ENCODE measurements at regions of chr9 and their contacts with region 1.

Region 1: GRCh38 chr9:129028192-129028957 is at the start of gene SH3GLB2:
- DNase-seq: peak; percentile 96
- H3K4me3 ChIP-seq: peak within 1 kb of the TSS; percentile 54 to 71
- H3K27ac ChIP-seq: peak within 1 kb of the TSS; percentile 51 to 81
- H3K4me1 ChIP-seq: peaks cover 9% of the 10 kb centered on the region
- H3K27me3 ChIP-seq: no peaks in the 10 kb centered on the region
- CTCF ChIP-seq: peak; percentile 78 to 88 (median 80)
- POLR2A ChIP-seq: no peak
- total RNA-seq, gene SH3GLB2: 113 to 178 TPM

Region 2: DNA sequence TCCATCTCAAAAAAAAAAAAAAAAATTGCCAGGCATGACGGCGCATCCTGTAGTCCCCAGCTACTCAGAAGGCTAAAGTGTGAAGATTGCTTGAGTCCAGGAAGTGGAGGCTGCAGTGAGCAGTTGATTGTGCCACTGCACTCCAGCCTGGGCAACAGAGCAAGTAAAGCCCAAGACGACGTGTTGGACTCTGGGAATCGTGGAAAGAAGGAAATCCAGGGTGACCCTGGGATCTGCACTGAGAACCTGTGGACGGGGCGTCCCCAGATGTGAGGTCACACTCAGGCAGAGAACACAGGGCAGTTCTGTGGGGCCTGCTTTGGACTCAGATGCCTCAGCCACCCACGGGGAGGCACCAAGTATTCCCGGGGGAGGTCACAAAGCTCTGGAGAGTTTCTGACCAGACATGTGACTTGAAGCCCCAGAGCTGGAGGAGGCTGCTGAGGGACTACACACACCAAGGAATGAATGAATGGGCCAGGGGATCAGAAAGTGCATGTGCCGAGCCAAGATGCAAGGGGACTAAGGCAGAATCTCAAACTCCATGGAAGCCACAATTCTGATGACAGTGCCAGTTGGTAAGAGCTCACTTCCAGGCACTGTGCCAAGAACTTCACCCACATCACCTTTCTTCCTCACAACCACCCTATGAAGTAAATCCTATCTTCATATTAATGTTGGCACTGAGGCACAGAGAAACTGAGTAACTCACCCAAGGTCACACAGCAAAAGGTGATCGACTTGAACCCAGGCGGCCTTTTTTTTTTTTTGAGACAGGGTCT is 384.7 kb before region 1 on chr9:
- intact Hi-C with region 1: no loop called
- DNase-seq: no peak
- H3K4me3 ChIP-seq: no peak overlapping the region
- H3K27ac ChIP-seq: no peak overlapping the region
- H3K4me1 ChIP-seq: no peaks in the 10 kb centered on the region
- H3K27me3 ChIP-seq: no peaks in the 10 kb centered on the region
- CTCF ChIP-seq: no peak
- POLR2A ChIP-seq: no peak

Region 3: GRCh38 chr9:128992995-128993394 is 35.4 kb before region 1 on chr9:
- intact Hi-C with region 1: loop called (anchors 5 kb)
- DNase-seq: no peak
- H3K4me3 ChIP-seq: no peak overlapping the region
- H3K27ac ChIP-seq: no peak overlapping the region
- H3K4me1 ChIP-seq: no peaks in the 10 kb centered on the region
- H3K27me3 ChIP-seq: no peaks in the 10 kb centered on the region
- CTCF ChIP-seq: peak in 2 of 4 experiments; percentile 27 to 32
- POLR2A ChIP-seq: no peak

Measured in prostate gland (tissue), 2 donors.